Posterior vena cava (tissue), 2 donors: ENCODE measurements at regions of chr1 and their contacts with region 1.

Region 1: DNA sequence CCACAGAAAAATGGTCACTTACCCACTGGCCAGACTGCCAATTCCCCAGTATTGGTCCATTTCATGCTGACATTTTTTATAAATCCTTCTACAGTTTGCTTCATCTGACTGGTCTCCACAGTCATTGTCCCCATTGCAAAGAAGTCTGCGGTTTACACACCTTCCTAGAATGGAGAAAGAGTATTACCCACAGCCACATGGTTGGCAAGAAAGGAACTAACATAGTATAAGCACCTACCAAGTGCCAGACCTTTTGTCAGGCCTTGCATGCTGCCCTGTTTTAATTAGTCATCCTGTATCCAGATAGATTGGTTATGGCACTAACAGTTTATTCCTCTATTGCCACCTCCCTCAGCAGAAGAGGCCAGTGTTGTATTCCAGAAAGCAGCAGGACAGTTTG is 11.2 kb downstream of the C8B start:
- DNase-seq: no peak

Region 2: DNA sequence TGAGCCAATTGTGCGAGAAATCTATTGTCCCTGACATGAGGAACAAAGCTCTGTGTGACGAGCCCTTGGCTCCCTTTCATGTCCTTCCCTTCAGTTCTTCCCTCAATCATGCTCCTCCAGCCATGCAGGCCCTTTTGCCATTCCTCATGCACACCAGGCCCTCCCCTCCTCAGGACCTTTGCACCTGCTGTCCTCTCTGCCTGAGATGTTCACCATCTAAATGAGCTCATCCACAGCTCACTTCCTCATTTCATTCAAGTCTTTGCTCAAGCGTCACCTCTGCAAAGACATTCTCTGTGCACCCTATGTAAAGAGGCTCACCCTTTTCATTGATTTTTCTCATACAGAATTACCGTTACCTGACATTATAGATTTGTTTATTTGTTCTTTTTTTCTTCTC is 32.6 kb before region 1 on chr1:
- intact Hi-C with region 1: loop called in 1 of 2 experiments (anchors 1 kb)
- DNase-seq: no peak

Region 3: DNA sequence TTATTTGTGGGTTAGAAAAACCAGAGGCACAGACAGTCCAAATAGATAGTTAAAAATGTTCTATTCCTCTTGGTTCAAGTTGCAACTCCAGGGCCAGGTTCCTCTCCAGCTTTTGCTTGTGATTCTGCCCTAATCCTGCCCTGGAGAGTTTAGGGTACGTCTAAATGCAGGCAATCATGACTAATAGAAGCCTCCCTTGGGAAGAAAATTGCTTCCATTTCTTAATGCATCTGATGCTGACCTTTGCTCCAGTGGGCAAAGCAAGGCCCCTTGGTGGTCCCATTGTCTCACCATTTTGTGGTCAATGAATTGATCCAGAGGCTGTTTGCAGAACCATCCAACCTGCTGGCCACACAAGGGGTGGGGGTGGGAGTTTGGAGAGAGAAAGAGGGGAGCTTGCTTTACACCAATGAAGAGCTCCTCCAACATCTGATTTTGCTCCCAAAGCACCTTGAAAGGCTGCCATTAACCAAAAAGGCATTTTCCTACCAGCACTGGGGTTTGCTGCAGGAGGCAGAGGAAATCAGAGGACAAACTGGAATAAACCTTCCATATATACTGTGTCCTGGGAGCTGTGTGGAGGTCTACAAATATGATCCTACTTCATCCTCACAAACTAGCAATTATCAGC is 20.1 kb before region 1 on chr1:
- intact Hi-C with region 1: no loop called
- DNase-seq: no peak

Region 4: DNA sequence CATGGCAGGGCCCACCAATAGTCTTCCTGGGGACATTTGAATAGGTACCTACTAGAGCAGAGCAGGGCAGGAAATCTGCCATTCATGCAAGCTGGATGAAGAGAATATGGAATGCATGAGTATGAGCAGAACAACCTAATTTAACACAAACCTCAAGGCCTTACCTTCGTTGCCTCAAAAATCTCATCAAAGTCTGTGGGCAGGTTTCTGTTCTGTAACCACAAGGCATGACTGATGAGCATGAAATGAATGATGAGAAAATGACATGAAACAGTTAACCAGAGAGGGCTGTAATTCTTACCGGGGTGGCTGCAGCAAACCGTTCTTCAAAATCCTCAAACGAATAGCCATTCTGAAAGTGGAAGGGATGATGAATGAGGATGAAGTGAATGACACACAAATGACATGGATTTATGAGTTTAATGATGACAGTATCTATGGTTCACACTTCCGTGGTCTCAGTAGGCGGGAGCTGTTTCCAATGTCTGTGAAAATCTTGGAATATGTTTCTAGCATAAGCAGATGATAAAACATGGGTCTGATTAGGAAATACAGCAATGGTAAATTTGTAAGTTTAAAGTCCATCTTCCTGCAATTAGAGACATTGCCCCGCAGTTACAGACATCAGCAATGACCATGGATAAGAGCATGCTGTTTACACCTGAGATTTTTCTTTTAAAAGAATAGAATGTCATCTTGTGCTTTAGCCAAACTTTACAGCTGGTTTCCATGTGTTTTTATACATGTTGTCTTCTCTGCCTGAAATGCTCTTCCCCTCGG is 78.7 kb after region 1 on chr1:
- intact Hi-C with region 1: no loop called
- DNase-seq: no peak